ENCODE measurements at regions of chr12 and their contacts with region 1.

Region 1: DNA sequence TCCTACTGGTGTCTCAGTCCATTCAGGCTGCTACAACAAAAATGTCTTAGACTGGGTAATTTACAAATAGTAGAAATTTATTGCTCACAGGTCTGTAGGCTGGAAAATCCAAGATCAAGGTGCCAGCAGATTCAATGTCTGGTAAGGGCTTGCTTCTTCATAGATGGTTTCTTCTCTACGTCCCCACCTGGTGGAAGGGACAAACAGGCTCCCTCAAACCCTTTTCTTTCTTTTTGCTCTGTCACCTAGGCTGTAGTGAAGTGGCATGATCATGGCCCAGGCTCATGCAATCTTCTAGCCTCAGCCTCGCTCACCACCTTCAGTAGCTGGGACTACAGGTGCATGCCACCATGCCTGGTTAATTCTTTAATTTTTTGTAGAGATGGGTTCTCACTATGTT is 106.8 kb upstream of the RPH3A start:
- DNase-seq: no peak
- ATAC-seq: no peak
- H3K4me3 Mint-ChIP-seq: no peak overlapping the region
- H3K27ac Mint-ChIP-seq: no peak overlapping the region
- H3K4me1 Mint-ChIP-seq: no peaks in the 10 kb centered on the region
- H3K27me3 Mint-ChIP-seq: peaks cover 34% of the 10 kb centered on the region

Region 2: GRCh38 chr12:112833272-112833671 is 148.5 kb after region 1 on chr12:
- CTCF ChIA-PET with region 1: no interaction called
- POLR2A ChIA-PET with region 1: no interaction called
- intact Hi-C with region 1: loop called in 1 of 2 experiments (anchors 5 kb)
- DNase-seq: no peak
- ATAC-seq: no peak
- H3K4me3 Mint-ChIP-seq: no peak overlapping the region
- H3K27ac Mint-ChIP-seq: no peak overlapping the region
- H3K4me1 Mint-ChIP-seq: no peaks in the 10 kb centered on the region
- H3K27me3 Mint-ChIP-seq: peaks cover 28% of the 10 kb centered on the region